Heart left ventricle (tissue), 16 donors: ENCODE measurements at regions of chr14 and their contacts with region 1.

Region 1: DNA sequence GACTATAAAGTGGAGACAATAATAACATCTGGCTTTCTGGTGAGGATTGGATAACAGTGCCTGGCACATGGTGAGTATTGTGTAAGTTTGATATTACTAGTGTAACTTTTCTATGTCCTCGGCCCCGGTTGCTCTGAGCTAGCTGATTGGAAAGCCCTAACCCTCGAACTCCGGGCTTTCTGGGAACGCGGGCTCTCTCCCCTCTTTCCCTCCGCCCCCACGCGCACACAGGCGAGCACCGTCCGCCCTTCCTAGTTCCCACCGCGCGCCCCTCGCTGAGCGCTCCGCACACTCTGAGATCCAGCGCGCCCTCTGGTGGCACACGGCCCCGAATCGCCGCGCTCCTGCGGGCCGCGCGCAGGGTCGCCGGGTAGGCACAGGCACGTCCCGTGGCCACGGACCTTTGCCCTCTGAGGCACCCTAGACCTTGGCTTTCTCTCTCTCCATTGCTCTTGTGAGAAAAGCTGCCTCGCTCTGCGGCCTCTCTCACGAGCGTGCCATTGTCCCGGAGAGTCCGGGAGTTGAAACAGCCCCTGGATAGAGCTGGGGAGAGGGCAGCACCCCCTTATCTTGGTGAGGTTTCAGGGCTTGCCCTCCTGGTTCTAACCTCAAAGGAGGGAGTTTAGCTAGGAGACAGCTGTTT is 23.2 kb upstream of the ESRRB start:
- DNase-seq: peak; percentile 37 to 74 (median 56)
- ATAC-seq: peak; percentile 44 to 78 (median 64)
- H3K4me3 ChIP-seq: peak overlapping the region in 10 of 12 donors; percentile 2 to 40 (median 29)
- H3K27ac ChIP-seq: no peak overlapping the region
- H3K4me1 ChIP-seq: peaks cover 0 to 27% (median 11%) of the 10 kb centered on the region in 12 donors
- H3K27me3 ChIP-seq: peaks cover 0 to 7% (median 0%) of the 10 kb centered on the region in 9 donors
- CTCF ChIP-seq: peak; percentile 73 to 95 (median 89)
- POLR2A ChIP-seq: no peak

Region 2: GRCh38 chr14:76050797-76051392 is 301.9 kb before region 1 on chr14:
- intact Hi-C with region 1: loop called (anchors 2 to 5 kb)
- DNase-seq: peak in 2 of 5 donors; percentile 44 to 50
- ATAC-seq: peak in 3 of 4 donors; percentile 73 to 78 (median 75)
- H3K4me3 ChIP-seq: no peak overlapping the region
- H3K27ac ChIP-seq: no peak overlapping the region
- H3K4me1 ChIP-seq: peaks cover 0 to 3% (median 0%) of the 10 kb centered on the region in 12 donors
- H3K27me3 ChIP-seq: no peaks in the 10 kb centered on the region
- CTCF ChIP-seq: peak; percentile 57 to 85 (median 76)
- POLR2A ChIP-seq: no peak

Region 3: GRCh38 chr14:76203086-76204001 is 149.4 kb before region 1 on chr14:
- intact Hi-C with region 1: loop called in 1 of 10 experiments (anchors 5 kb)
- DNase-seq: peak in 3 of 5 donors; percentile 10 to 27 (median 25)
- ATAC-seq: peak in 3 of 4 donors; percentile 38 to 77 (median 48)
- H3K4me3 ChIP-seq: no peak overlapping the region
- H3K27ac ChIP-seq: no peak overlapping the region
- H3K4me1 ChIP-seq: peaks cover 0 to 7% (median 0%) of the 10 kb centered on the region in 12 donors
- H3K27me3 ChIP-seq: no peaks in the 10 kb centered on the region
- CTCF ChIP-seq: no peak
- POLR2A ChIP-seq: no peak

Region 4: GRCh38 chr14:76311079-76311758 is 41.5 kb before region 1 on chr14:
- intact Hi-C with region 1: loop called in 1 of 10 experiments (anchors 2 kb)
- DNase-seq: no peak
- ATAC-seq: no peak
- H3K4me3 ChIP-seq: peak overlapping the region; percentile 3 to 60 (median 46)
- H3K27ac ChIP-seq: peak overlapping the region in 10 of 12 donors; percentile 13 to 84 (median 70)
- H3K4me1 ChIP-seq: peaks cover 0 to 31% (median 8%) of the 10 kb centered on the region in 12 donors
- H3K27me3 ChIP-seq: peaks cover 0 to 16% (median 0%) of the 10 kb centered on the region in 9 donors
- CTCF ChIP-seq: no peak
- POLR2A ChIP-seq: no peak